Endothelial cell of umbilical vein (primary cell): ENCODE measurements at regions of chr1 and their contacts with region 1.

Region 1: DNA sequence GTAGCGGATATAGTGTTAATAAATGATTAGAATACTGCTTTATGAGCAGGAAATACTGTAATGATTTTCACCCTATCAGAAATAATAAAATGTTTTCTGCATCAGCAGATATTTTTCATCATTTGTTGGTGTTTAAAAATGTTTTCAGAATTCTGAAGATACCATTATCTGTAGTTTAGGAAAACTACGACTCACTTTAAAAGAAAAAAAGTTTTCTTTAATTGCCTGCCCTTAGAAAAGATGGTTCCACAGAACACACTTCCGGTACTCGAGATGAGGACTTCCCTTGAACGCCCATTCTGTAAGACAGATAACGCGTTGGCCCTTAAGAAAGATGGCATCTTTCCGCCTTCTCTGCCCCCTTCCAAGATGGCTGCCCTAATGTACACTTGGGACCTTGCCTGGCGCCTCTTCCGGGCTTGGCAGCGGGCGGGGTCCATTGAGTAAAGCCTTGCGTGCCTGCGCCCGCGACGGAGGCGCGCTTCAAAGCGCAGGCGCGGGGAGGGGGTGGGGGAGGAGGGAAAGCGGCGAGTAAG is at the start of gene SZRD1:
- DNase-seq: peak; percentile 100
- H3K4me3 ChIP-seq: peak within 1 kb of the TSS; percentile 79 to 94 (median 88)
- H3K27ac ChIP-seq: peak within 1 kb of the TSS; percentile 85
- H3K4me1 ChIP-seq: peaks cover 21% of the 10 kb centered on the region
- H3K27me3 ChIP-seq: no peaks in the 10 kb centered on the region
- CTCF ChIP-seq: no peak
- POLR2A ChIP-seq: no peak
- total RNA-seq, gene SZRD1: 164 and 168 TPM in 2 replicates

Region 2: GRCh38 chr1:16009030-16009709 is 357.6 kb before region 1 on chr1:
- CTCF ChIA-PET with region 1: interaction called, 3 read pairs
- POLR2A ChIA-PET with region 1: no interaction called
- dilution Hi-C with region 1: no loop called
- intact Hi-C with region 1: loop called (anchors 1 kb)
- DNase-seq: peak; percentile 73
- H3K4me3 ChIP-seq: no peak overlapping the region
- H3K27ac ChIP-seq: no peak overlapping the region
- H3K4me1 ChIP-seq: peaks cover 4% of the 10 kb centered on the region
- H3K27me3 ChIP-seq: no peaks in the 10 kb centered on the region
- CTCF ChIP-seq: peak; percentile 95 to 97
- POLR2A ChIP-seq: no peak

Region 3: GRCh38 chr1:16146279-16147155 is 220.3 kb before region 1 on chr1:
- CTCF ChIA-PET with region 1: interaction called, 7 read pairs
- POLR2A ChIA-PET with region 1: no interaction called
- dilution Hi-C with region 1: no loop called
- intact Hi-C with region 1: loop called (anchors 2 kb)
- DNase-seq: peak; percentile 93
- H3K4me3 ChIP-seq: peak overlapping the region in 2 of 3 experiments; percentile 14 to 23
- H3K27ac ChIP-seq: peak overlapping the region; percentile 99
- H3K4me1 ChIP-seq: peaks cover 97% of the 10 kb centered on the region
- H3K27me3 ChIP-seq: no peaks in the 10 kb centered on the region
- CTCF ChIP-seq: no peak
- POLR2A ChIP-seq: peak; percentile 55

Region 4: DNA sequence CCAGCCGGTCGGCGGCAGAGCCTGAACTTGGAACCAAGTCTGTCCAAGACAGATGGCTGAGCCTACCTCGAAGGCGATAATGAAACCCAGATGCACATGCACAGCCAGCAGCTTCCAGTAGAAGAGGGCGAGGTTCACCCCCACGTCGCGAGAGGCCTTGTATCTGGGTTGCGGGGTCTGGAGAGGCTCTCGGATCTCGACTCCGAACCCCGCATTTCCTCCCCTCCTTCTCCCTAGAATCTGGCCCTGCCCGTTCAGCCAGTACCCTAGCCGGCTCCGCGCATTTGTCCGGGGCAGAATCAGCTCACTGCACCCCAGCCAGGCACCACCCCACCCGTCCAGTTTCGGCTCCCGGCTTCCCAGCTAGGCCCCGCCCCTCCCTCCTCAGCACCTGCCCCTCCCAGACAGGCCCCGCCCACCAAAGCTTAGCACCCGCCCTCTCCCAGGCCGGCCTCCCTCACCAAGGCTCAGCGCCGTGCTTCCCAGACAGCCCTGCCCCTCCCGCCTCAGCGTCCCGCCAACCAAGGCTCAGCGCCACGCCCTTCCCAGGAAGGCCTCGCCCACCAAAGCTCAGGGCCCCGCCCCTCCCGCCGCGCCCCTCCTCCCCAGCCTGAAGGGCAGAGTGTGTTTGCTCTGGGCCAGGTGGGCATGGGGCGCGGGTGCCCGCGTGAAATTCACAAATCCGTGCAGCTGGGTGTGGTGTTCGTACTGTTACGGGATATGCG is 149.6 kb before region 1 on chr1:
- CTCF ChIA-PET with region 1: interaction called, 15 read pairs
- POLR2A ChIA-PET with region 1: interaction called, 3 read pairs
- dilution Hi-C with region 1: no loop called
- intact Hi-C with region 1: no loop called
- DNase-seq: peak; percentile 96
- H3K4me3 ChIP-seq: peak overlapping the region; percentile 39 to 58 (median 42)
- H3K27ac ChIP-seq: no peak overlapping the region
- H3K4me1 ChIP-seq: peaks cover 8% of the 10 kb centered on the region
- H3K27me3 ChIP-seq: peaks cover 0 to 2% of the 10 kb centered on the region in 2 experiments
- CTCF ChIP-seq: no peak
- POLR2A ChIP-seq: no peak

Region 5: GRCh38 chr1:16243936-16244649 is 122.7 kb before region 1 on chr1:
- CTCF ChIA-PET with region 1: interaction called, 39 read pairs
- POLR2A ChIA-PET with region 1: no interaction called
- dilution Hi-C with region 1: no loop called
- intact Hi-C with region 1: loop called (anchors 1 kb)
- DNase-seq: peak; percentile 87
- H3K4me3 ChIP-seq: no peak overlapping the region
- H3K27ac ChIP-seq: no peak overlapping the region
- H3K4me1 ChIP-seq: peaks cover 17% of the 10 kb centered on the region
- H3K27me3 ChIP-seq: no peaks in the 10 kb centered on the region
- CTCF ChIP-seq: peak; percentile 83 to 85
- POLR2A ChIP-seq: no peak

Region 6: DNA sequence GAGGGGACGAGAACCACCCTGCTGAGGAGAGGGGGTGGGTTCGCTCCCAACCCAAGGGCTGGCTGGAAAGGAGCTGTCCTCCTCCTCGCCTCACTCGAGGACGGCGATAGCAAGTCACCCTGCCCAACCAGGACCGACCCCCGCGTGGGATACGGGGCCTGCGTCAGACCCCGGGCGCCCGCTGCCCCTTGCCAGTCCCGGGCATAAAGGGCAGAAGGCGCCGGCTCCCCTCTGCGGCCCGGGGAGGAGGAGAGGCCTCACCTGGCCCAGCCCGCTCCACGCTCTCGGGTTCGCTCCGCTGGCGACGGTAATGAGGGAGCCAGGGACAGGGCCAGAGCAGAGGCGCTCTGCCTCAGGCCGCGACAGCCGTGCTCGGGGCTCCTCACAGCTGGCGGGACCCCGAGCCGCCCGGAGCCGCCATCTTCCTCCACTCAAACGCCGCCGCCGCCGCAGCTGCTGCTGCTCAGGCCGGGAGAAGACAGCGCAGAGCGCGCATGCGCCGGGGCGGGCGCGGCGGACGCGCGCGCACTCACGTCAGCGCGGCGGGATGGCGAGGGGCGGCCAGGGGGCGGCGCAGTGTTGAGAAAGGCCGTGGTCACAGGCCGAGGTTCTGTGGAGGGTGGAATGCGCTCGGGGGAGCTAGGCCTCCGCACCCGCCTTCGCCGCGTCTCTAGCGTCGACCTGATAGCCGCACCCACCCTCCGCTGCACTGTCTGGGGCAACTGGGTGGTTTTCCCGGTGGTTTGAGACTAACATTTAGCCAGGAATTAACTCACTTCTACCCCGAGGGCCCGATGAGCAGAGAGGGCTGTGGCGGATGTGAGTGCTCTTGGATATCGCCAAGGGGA is 14.6 kb before region 1 on chr1 and contains the start of gene FBXO42:
- CTCF ChIA-PET with region 1: interaction called, 76 read pairs
- POLR2A ChIA-PET with region 1: no interaction called
- dilution Hi-C with region 1: no loop called
- intact Hi-C with region 1: no loop called
- DNase-seq: peak; percentile 96
- H3K4me3 ChIP-seq: peak within 1 kb of the TSS; percentile 66 to 88 (median 85)
- H3K27ac ChIP-seq: peak within 1 kb of the TSS; percentile 86
- H3K4me1 ChIP-seq: peaks cover 26% of the 10 kb centered on the region
- H3K27me3 ChIP-seq: no peaks in the 10 kb centered on the region
- CTCF ChIP-seq: peak; percentile 36 to 50
- POLR2A ChIP-seq: peak; percentile 80
- total RNA-seq, gene FBXO42: 16.3 and 17.3 TPM in 2 replicates

Region 7: DNA sequence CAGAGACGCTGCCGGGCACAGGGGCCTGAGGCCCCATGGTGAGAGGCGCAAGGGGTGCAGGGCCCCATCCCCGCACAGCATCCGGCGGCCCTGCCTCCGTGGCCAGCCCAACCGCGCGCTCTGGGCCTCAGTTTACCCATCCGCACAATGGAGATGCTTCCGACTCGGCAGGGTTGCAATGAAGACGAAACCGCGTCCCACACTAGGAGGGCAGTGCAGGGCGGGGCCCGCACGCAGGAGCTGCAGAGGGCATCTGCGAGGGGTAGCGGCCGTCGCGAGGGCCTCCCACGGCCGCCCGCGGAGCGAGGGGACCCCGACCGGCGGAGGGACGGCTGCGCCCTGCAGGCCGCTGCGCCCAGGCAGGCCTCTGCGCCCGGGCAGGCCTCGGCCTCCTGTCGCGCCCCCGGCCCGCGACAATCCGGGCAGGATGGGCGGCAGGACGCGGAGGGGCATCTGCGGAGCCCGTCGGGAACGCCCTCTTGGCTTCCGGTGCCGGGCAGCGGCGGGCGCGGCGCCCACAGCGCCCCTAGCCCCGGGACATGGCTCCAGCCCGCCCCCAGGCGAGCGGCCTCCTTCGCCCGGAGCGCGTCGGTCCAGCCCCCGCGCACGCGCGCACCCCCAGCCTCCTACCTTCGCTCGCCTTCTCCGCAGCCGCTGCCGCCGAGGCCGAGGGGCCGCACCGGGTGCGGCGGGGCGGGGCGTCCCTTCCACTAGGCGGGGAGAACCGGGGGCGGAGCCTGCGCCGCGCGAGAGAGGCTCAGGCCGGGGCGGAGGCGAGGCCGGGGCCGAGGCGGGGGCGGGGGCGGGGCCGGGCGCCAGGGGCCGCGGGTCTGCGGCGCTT is 132.0 kb after region 1 on chr1:
- CTCF ChIA-PET with region 1: no interaction called
- POLR2A ChIA-PET with region 1: no interaction called
- dilution Hi-C with region 1: no loop called
- intact Hi-C with region 1: loop called (anchors 5 kb)
- DNase-seq: peak; percentile 90
- H3K4me3 ChIP-seq: peak overlapping the region; percentile 43 to 91 (median 67)
- H3K27ac ChIP-seq: no peak overlapping the region
- H3K4me1 ChIP-seq: peaks cover 3% of the 10 kb centered on the region
- H3K27me3 ChIP-seq: no peaks in the 10 kb centered on the region
- CTCF ChIP-seq: no peak
- POLR2A ChIP-seq: peak; percentile 73

Region 8: GRCh38 chr1:16631248-16632043 is 264.7 kb after region 1 on chr1:
- CTCF ChIA-PET with region 1: no interaction called
- POLR2A ChIA-PET with region 1: no interaction called
- dilution Hi-C with region 1: no loop called
- intact Hi-C with region 1: no loop called
- DNase-seq: no peak
- H3K4me3 ChIP-seq: no peak overlapping the region
- H3K27ac ChIP-seq: no peak overlapping the region
- H3K4me1 ChIP-seq: no peaks in the 10 kb centered on the region
- H3K27me3 ChIP-seq: no peaks in the 10 kb centered on the region
- CTCF ChIP-seq: no peak
- POLR2A ChIP-seq: no peak

Region 9: DNA sequence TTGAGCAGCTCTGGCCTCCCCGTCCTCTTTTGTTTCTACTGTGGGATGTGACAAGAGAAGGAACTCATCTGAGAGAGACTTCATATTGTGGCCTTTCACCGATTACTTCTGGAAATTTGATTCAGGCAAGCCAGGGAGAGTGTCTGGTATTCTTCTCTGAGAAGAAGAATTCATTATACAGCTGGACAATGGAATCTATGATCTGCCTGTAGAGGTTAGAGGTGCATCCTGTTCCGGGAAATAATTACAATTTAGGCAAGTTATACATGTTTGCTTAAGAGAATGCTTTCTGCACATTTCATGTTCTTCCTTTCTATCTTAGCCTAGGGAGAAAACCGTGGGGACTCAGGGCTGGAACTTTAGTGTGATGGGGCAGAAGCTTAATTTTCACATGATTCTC is 516.2 kb after region 1 on chr1:
- CTCF ChIA-PET with region 1: no interaction called
- POLR2A ChIA-PET with region 1: no interaction called
- dilution Hi-C with region 1: no loop called
- intact Hi-C with region 1: no loop called
- DNase-seq: peak; percentile 56
- H3K4me3 ChIP-seq: no peak overlapping the region
- H3K27ac ChIP-seq: no peak overlapping the region
- H3K4me1 ChIP-seq: peaks cover 9% of the 10 kb centered on the region
- H3K27me3 ChIP-seq: peaks cover 22 to 30% of the 10 kb centered on the region in 2 experiments
- CTCF ChIP-seq: no peak
- POLR2A ChIP-seq: no peak